GM12878 (cell line): ENCODE measurements at regions of chr12 and their contacts with region 1.

Region 1: DNA sequence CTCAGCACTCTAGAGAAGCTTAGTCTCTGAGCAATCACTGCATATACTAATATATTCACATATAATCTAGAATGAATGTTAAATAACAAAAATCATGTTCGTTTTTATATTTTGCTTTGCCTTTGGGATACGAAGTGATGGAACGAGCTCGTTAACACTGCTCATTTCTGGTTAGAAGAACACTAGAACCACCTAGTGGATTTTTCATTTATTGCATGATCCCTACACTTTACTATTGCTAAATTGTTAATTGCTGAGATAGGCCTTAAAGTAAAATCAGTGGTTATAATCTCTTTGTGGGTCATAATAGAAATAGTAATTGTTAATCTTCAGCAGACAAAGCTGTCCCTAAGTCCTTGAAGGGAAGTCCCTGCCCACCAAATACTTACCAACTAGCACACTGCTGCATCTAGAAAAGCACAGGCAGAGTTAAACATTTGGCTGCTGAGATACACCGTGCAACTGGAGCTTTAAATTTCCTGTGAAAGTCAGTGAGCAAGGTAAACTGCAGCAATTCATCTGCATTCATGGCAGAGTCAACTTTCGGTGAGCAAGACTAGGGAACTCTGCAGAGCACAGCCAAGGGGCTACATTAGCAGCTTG is 353.7 kb downstream of the APAF1 start:
- DNase-seq: no peak
- ATAC-seq: peak; percentile 92
- H3K4me3 ChIP-seq: no peak overlapping the region
- H3K27ac ChIP-seq: no peak overlapping the region
- H3K4me1 ChIP-seq: no peaks in the 10 kb centered on the region
- H3K27me3 ChIP-seq: no peaks in the 10 kb centered on the region
- CTCF ChIP-seq: peak; percentile 47 to 80 (median 64); a peak in 5 of 6 replicates
- EP300 ChIP-seq: no peak
- POLR2A ChIP-seq: no peak
- RAD21 ChIP-seq: peak; percentile 86

Region 2: GRCh38 chr12:98490501-98491453 is 508.0 kb before region 1 on chr12:
- CTCF ChIA-PET with region 1: interaction called, 11 read pairs
- POLR2A ChIA-PET with region 1: no interaction called
- RAD21 ChIA-PET with region 1: interaction called, 3 read pairs
- SMC1A ChIA-PET with region 1: interaction called, 5 read pairs
- in situ Hi-C with region 1: no loop called
- intact Hi-C with region 1: loop called (anchors 2 kb)
- DNase-seq: peak; percentile 64
- ATAC-seq: peak; percentile 95
- H3K4me3 ChIP-seq: no peak overlapping the region
- H3K27ac ChIP-seq: peak overlapping the region; percentile 32
- H3K4me1 ChIP-seq: peaks cover 3% of the 10 kb centered on the region; the same call in 1 of the 2 replicates
- H3K27me3 ChIP-seq: no peaks in the 10 kb centered on the region; a peak in 1 of 4 replicates
- CTCF ChIP-seq: peak; percentile 82 to 89 (median 85)
- EP300 ChIP-seq: no peak
- POLR2A ChIP-seq: peak; percentile 54; the same call in 1 of the 2 replicates
- RAD21 ChIP-seq: peak; percentile 73

Region 3: GRCh38 chr12:98572010-98572409 is 426.8 kb before region 1 on chr12:
- CTCF ChIA-PET with region 1: interaction called, 40 read pairs
- POLR2A ChIA-PET with region 1: no interaction called
- RAD21 ChIA-PET with region 1: interaction called, 32 read pairs
- SMC1A ChIA-PET with region 1: interaction called, 10 read pairs
- in situ Hi-C with region 1: loop called (anchors 5 kb)
- intact Hi-C with region 1: loop called (anchors 5 kb)
- DNase-seq: no peak
- ATAC-seq: peak; percentile 53; the same call in 2 of the 3 replicates
- H3K4me3 ChIP-seq: no peak overlapping the region
- H3K27ac ChIP-seq: no peak overlapping the region
- H3K4me1 ChIP-seq: no peaks in the 10 kb centered on the region
- H3K27me3 ChIP-seq: no peaks in the 10 kb centered on the region
- CTCF ChIP-seq: peak; percentile 4 to 34 (median 31); a peak in 2 of 6 replicates
- EP300 ChIP-seq: no peak
- POLR2A ChIP-seq: no peak
- RAD21 ChIP-seq: no peak

Region 4: DNA sequence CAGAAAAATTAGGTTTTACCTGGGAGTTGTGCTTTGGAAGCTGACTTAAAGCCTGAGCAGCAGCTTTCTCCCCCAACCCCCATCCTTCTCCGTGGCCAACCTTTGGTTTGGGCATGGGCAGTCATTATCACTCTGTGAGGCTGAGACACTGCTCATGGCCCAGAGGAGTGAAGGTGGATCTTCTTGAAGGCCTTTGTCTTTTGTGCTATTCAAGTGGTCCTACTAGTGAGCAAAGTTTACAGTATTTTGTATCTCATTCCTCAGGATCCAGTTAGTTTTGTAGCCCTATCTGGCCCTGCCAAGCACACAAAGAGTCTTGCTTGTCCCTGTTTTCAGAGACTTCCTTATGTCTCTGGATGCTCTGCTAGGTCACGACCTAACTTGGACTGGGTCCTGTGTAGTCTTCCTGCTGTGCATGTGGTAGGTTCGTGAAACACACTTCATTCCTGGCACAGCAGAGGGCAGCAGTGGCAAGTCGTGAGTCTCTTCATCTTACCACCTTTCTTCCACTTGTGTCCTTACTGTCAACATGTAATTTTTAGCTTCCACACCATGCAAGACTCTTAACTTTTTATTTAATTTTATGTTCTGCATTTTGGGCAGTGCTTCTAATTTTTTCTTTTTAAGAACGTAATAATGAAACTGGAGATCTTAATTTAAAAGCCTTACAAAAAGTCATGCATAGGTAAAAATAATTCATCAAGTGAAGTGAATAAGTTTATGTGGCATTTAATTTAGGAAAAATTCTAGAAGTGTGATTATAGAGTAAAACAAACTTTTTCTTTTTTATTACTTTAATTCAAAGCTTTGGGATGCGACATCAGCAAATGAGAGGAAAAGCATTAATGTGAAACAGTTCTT is 300.0 kb before region 1 on chr12:
- CTCF ChIA-PET with region 1: interaction called, 31 read pairs
- POLR2A ChIA-PET with region 1: interaction called, 3 read pairs
- RAD21 ChIA-PET with region 1: interaction called, 26 read pairs
- SMC1A ChIA-PET with region 1: interaction called, 15 read pairs
- in situ Hi-C with region 1: loop called (anchors 10 kb)
- intact Hi-C with region 1: loop called (anchors 1 kb)
- DNase-seq: peak; percentile 38
- ATAC-seq: peak; percentile 99
- H3K4me3 ChIP-seq: no peak overlapping the region
- H3K27ac ChIP-seq: no peak overlapping the region
- H3K4me1 ChIP-seq: no peaks in the 10 kb centered on the region
- H3K27me3 ChIP-seq: no peaks in the 10 kb centered on the region
- CTCF ChIP-seq: peak; percentile 71 to 77 (median 75)
- EP300 ChIP-seq: no peak
- POLR2A ChIP-seq: no peak
- RAD21 ChIP-seq: peak; percentile 68

Region 5: DNA sequence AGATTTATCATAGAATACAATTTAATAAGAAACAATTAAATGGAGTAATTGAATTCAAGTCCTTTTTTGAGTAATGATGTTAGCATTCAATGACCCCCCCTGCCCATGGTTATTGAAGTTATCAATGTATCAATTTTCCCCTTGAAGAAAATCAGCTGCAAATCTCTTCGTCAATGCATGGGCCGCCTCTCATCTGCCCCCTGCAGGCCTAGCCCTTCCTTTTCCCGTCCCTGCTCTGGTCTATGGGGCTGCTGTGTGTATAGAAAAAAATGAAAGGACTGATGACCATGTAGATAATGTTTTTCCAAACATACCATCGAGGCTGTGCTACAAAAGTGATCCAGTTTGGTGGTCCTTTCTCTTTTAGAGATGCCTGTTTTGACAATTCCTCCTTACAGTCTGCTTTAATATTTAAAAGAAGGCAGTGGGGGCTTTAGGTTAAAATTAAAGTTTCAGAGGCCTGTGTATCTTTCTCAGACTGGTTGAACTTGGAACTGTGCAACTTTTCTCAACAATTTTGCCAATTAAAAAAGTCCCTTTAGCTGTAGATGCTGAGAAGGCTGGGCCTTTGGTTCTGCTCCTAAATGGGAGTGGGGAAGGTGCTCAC is 255.3 kb before region 1 on chr12:
- CTCF ChIA-PET with region 1: interaction called, 10 read pairs
- POLR2A ChIA-PET with region 1: no interaction called
- RAD21 ChIA-PET with region 1: interaction called, 5 read pairs
- SMC1A ChIA-PET with region 1: interaction called, 6 read pairs
- in situ Hi-C with region 1: no loop called
- intact Hi-C with region 1: no loop called
- DNase-seq: no peak
- ATAC-seq: peak; percentile 90
- H3K4me3 ChIP-seq: no peak overlapping the region
- H3K27ac ChIP-seq: no peak overlapping the region
- H3K4me1 ChIP-seq: peaks cover 4% of the 10 kb centered on the region; the same call in 1 of the 2 replicates
- H3K27me3 ChIP-seq: peaks cover 3 to 7% of the 10 kb centered on the region in 2 experiments; a peak in 3 of 4 replicates
- CTCF ChIP-seq: peak; percentile 55 to 81 (median 71)
- EP300 ChIP-seq: no peak
- POLR2A ChIP-seq: no peak
- RAD21 ChIP-seq: peak; percentile 46

Region 6: GRCh38 chr12:98955277-98955676 is 43.5 kb before region 1 on chr12:
- CTCF ChIA-PET with region 1: interaction called, 63 read pairs
- POLR2A ChIA-PET with region 1: no interaction called
- RAD21 ChIA-PET with region 1: interaction called, 9 read pairs
- SMC1A ChIA-PET with region 1: interaction called, 21 read pairs
- in situ Hi-C with region 1: no loop called
- intact Hi-C with region 1: loop called (anchors 2 kb)
- DNase-seq: no peak
- ATAC-seq: peak; percentile 87
- H3K4me3 ChIP-seq: no peak overlapping the region
- H3K27ac ChIP-seq: no peak overlapping the region
- H3K4me1 ChIP-seq: no peaks in the 10 kb centered on the region
- H3K27me3 ChIP-seq: no peaks in the 10 kb centered on the region
- CTCF ChIP-seq: peak; percentile 45 to 50 (median 48); a peak in 5 of 6 replicates
- EP300 ChIP-seq: no peak
- POLR2A ChIP-seq: no peak
- RAD21 ChIP-seq: peak; percentile 45

Region 7: DNA sequence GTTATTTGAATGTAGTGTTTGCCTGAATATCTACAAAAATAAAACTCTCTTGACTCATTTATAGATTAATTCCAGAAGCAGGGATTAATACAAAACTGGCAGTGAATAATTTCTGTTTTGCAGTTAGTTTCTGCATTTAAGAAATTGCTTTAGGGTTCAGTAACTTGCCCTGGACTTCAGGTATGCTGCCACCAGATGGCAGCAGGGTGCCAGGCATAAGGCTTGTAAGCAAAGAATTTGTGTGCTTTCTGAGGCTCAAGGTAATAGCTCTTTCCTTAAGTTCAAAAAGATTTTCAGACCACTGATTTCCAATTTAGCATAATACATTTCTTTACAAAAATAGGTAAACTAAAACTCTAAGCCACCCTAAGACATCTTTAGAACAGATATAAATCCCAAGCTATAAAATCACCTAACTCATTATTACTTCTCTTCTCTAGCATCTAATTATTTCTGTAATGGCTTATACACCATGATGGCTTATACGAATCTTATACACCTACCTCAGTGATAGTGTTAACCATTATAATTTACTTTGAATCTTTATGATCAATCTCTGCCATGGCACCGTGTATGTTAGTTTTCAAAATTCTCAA is 44.6 kb after region 1 on chr12:
- CTCF ChIA-PET with region 1: interaction called, 11 read pairs
- POLR2A ChIA-PET with region 1: no interaction called
- RAD21 ChIA-PET with region 1: interaction called, 4 read pairs
- SMC1A ChIA-PET with region 1: interaction called, 4 read pairs
- in situ Hi-C with region 1: no loop called
- intact Hi-C with region 1: no loop called
- DNase-seq: peak; percentile 28
- ATAC-seq: peak; percentile 82
- H3K4me3 ChIP-seq: no peak overlapping the region
- H3K27ac ChIP-seq: no peak overlapping the region
- H3K4me1 ChIP-seq: no peaks in the 10 kb centered on the region
- H3K27me3 ChIP-seq: peaks cover 0 to 3% of the 10 kb centered on the region in 2 experiments; a peak in 1 of 4 replicates
- CTCF ChIP-seq: peak; percentile 84 to 88 (median 86)
- EP300 ChIP-seq: no peak
- POLR2A ChIP-seq: no peak
- RAD21 ChIP-seq: peak; percentile 97

Region 8: DNA sequence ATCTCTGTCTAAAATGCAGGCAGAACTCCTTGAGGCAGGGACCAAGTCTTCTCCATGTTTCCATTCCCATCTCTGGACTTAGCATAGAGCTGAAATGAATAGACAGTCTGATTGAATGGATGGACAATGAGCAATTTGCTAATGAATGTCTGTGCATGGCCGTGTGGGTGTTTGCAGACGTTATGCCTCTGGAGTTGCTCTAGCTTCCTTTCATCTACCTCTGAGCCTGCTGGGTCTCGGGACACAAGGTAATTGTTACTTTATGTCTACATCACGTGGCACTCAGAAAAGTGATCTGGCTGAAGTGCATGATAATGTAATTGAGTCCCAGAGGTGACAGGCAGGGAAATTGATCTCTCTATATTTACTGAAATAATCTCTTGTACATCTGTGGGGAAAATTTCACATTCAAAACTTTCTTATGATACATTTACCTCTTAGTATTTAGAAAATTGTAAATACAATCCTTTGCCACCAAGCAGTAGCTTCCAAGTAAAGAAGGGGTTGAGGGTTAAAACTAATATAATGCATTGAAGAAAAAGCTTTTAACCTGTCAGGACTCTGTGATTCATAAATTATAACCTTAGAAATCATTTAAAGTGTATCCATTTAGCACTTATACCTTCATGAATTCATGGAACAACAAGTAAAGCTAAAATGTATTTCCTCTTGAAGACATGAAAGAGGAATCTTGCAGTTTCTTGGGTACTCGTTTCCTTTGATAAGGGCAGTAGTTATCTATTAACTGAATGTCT is 70.4 kb after region 1 on chr12:
- CTCF ChIA-PET with region 1: no interaction called
- POLR2A ChIA-PET with region 1: no interaction called
- RAD21 ChIA-PET with region 1: no interaction called
- SMC1A ChIA-PET with region 1: no interaction called
- in situ Hi-C with region 1: no loop called
- intact Hi-C with region 1: no loop called
- DNase-seq: no peak
- ATAC-seq: no peak
- H3K4me3 ChIP-seq: no peak overlapping the region
- H3K27ac ChIP-seq: no peak overlapping the region
- H3K4me1 ChIP-seq: no peaks in the 10 kb centered on the region
- H3K27me3 ChIP-seq: no peaks in the 10 kb centered on the region
- CTCF ChIP-seq: no peak
- EP300 ChIP-seq: no peak
- POLR2A ChIP-seq: no peak
- RAD21 ChIP-seq: no peak

Region 9: GRCh38 chr12:99121521-99121920 is 122.7 kb after region 1 on chr12:
- CTCF ChIA-PET with region 1: no interaction called
- POLR2A ChIA-PET with region 1: no interaction called
- RAD21 ChIA-PET with region 1: no interaction called
- SMC1A ChIA-PET with region 1: no interaction called
- in situ Hi-C with region 1: no loop called
- intact Hi-C with region 1: no loop called
- DNase-seq: no peak
- ATAC-seq: no peak
- H3K4me3 ChIP-seq: no peak overlapping the region
- H3K27ac ChIP-seq: no peak overlapping the region
- H3K4me1 ChIP-seq: no peaks in the 10 kb centered on the region
- H3K27me3 ChIP-seq: no peaks in the 10 kb centered on the region; a peak in 1 of 4 replicates
- CTCF ChIP-seq: no peak
- EP300 ChIP-seq: no peak
- POLR2A ChIP-seq: no peak
- RAD21 ChIP-seq: no peak